Calu3 (cell line): ENCODE measurements at regions of chr10 and their contacts with region 1.

Region 1: GRCh38 chr10:88553116-88553752 is 29.9 kb downstream of the RNLS start:
- DNase-seq: peak; percentile 9
- H3K4me3 Mint-ChIP-seq: no peak overlapping the region
- H3K27ac Mint-ChIP-seq: no peak overlapping the region
- H3K4me1 Mint-ChIP-seq: peaks cover 8% of the 10 kb centered on the region
- H3K27me3 Mint-ChIP-seq: no peaks in the 10 kb centered on the region
- CTCF ChIP-seq: peak; percentile 39

Region 2: GRCh38 chr10:88401671-88402347 is 151.4 kb before region 1 on chr10:
- CTCF ChIA-PET with region 1: interaction called, 4 read pairs
- intact Hi-C with region 1: loop called (anchors 1 kb)
- DNase-seq: no peak
- H3K4me3 Mint-ChIP-seq: no peak overlapping the region
- H3K27ac Mint-ChIP-seq: no peak overlapping the region
- H3K4me1 Mint-ChIP-seq: peaks cover 18% of the 10 kb centered on the region
- H3K27me3 Mint-ChIP-seq: no peaks in the 10 kb centered on the region
- CTCF ChIP-seq: no peak

Region 3: GRCh38 chr10:88473989-88474883 is 79.0 kb before region 1 on chr10:
- CTCF ChIA-PET with region 1: no interaction called
- intact Hi-C with region 1: loop called (anchors 5 kb)
- DNase-seq: peak; percentile 61
- H3K4me3 Mint-ChIP-seq: no peak overlapping the region
- H3K27ac Mint-ChIP-seq: no peak overlapping the region
- H3K4me1 Mint-ChIP-seq: peaks cover 17% of the 10 kb centered on the region
- H3K27me3 Mint-ChIP-seq: no peaks in the 10 kb centered on the region
- CTCF ChIP-seq: no peak

Region 4: GRCh38 chr10:88490231-88490980 is 62.8 kb before region 1 on chr10:
- CTCF ChIA-PET with region 1: no interaction called
- intact Hi-C with region 1: no loop called
- DNase-seq: no peak
- H3K4me3 Mint-ChIP-seq: no peak overlapping the region
- H3K27ac Mint-ChIP-seq: no peak overlapping the region
- H3K4me1 Mint-ChIP-seq: no peaks in the 10 kb centered on the region
- H3K27me3 Mint-ChIP-seq: no peaks in the 10 kb centered on the region
- CTCF ChIP-seq: no peak